IMR-90 (cell line): ENCODE measurements at regions of chr9 and their contacts with region 1.

Region 1: GRCh38 chr9:8374471-8374870 is 574.9 kb upstream of the DMAC1 start:
- DNase-seq: no peak
- ATAC-seq: no peak
- H3K4me3 ChIP-seq: no peak overlapping the region
- H3K27ac ChIP-seq: no peak overlapping the region
- H3K4me1 ChIP-seq: no peaks in the 10 kb centered on the region
- H3K27me3 ChIP-seq: no peaks in the 10 kb centered on the region
- CTCF ChIP-seq: no peak
- POLR2A ChIP-seq: no peak
- RAD21 ChIP-seq: no peak

Region 2: GRCh38 chr9:7844242-7844641 is 530.2 kb before region 1 on chr9:
- CTCF ChIA-PET with region 1: no interaction called
- POLR2A ChIA-PET with region 1: no interaction called
- dilution Hi-C with region 1: no loop called
- in situ Hi-C with region 1: no loop called
- intact Hi-C with region 1: no loop called
- DNase-seq: peak; percentile 7
- ATAC-seq: peak; percentile 67
- H3K4me3 ChIP-seq: no peak overlapping the region
- H3K27ac ChIP-seq: no peak overlapping the region
- H3K4me1 ChIP-seq: no peaks in the 10 kb centered on the region
- H3K27me3 ChIP-seq: no peaks in the 10 kb centered on the region
- CTCF ChIP-seq: 0 out of 2 replicates have a peak, but pooled peaks have one; percentile 18
- POLR2A ChIP-seq: no peak
- RAD21 ChIP-seq: no peak

Region 3: GRCh38 chr9:8391566-8391965 is 17.1 kb after region 1 on chr9:
- CTCF ChIA-PET with region 1: no interaction called
- POLR2A ChIA-PET with region 1: no interaction called
- dilution Hi-C with region 1: no loop called
- in situ Hi-C with region 1: no loop called
- intact Hi-C with region 1: no loop called
- DNase-seq: no peak
- ATAC-seq: no peak
- H3K4me3 ChIP-seq: no peak overlapping the region
- H3K27ac ChIP-seq: no peak overlapping the region
- H3K4me1 ChIP-seq: no peaks in the 10 kb centered on the region
- H3K27me3 ChIP-seq: no peaks in the 10 kb centered on the region
- CTCF ChIP-seq: no peak
- POLR2A ChIP-seq: no peak
- RAD21 ChIP-seq: no peak

Region 4: DNA sequence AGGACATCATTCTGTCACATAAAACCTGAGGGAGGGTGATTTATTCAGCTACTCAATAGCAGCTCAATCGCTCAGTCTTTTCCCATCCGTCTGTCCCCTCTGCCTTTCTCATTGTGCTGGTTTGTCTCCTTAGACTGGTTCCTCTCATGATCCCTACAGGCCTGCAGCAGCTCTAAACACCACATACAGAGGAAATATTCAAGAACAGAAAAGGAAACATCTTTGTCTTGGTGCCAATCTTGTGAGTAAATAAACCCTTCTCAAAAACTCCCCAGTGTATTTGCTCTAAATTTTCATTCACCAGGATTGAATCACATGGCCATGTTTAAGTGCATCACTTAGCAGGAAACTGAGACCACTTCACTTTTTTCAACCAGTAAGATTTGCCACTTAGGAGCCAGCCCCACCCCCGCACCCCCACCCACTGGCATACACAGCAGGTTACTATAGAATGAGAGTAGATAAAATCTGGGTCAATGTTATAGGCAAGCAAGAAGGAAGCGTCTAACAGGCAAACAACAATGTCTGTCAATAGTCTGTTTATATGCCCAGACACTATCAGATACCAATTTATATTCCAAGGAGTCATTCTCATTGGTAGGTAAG is 320.6 kb after region 1 on chr9:
- CTCF ChIA-PET with region 1: no interaction called
- POLR2A ChIA-PET with region 1: no interaction called
- dilution Hi-C with region 1: no loop called
- in situ Hi-C with region 1: no loop called
- intact Hi-C with region 1: loop called (anchors 10 kb)
- DNase-seq: no peak
- ATAC-seq: no peak
- H3K4me3 ChIP-seq: no peak overlapping the region
- H3K27ac ChIP-seq: no peak overlapping the region
- H3K4me1 ChIP-seq: no peaks in the 10 kb centered on the region
- H3K27me3 ChIP-seq: no peaks in the 10 kb centered on the region
- CTCF ChIP-seq: no peak
- POLR2A ChIP-seq: no peak
- RAD21 ChIP-seq: no peak